Activated T-helper 2 cell treated with anti-CD3 and anti-CD28 coated beads, Interferon-gamma antibody, Interleukin-2, Interleukin-4, amounts not matched to agents 10 μg/mL and 5 μg/mL and 100 μg/mL, durations not matched to agents 14 hours and 24 hours and 36 hours (primary cell): ENCODE measurements at regions of chr12 and their contacts with region 1.

Region 1: DNA sequence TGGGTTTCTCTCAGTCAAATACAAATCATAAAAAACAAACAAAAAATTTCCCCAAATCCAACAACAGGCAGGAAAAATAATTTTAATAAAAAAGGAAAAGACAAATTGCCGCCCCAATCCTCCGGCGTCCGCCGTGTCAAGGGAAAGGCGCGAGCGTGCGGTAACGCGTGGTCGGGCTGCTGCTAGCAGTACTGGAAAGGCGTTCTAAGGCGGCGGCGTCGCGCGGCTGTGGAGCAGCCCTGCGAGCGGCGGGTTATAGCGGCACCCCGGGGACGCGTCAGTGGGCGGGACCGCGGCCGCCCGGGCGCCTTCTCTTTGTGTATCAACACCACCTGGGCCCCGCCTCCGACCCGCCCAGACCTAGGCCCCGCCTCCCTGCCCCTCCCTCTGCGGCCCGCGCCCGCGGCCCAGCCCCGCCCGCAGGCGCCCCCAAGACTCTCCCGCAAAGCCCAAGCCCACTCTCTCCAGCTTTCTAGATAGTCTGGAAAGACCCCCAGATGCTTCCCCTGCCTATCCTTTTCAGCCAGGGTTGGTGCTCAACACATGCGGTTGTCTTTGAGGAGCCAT is at the start of gene SLC38A2:
- DNase-seq: peak; percentile 95
- H3K4me3 Mint-ChIP-seq: peak within 1 kb of the TSS; percentile 92
- H3K27ac Mint-ChIP-seq: peak within 1 kb of the TSS; percentile 95
- H3K4me1 Mint-ChIP-seq: peaks cover 52% of the 10 kb centered on the region
- H3K27me3 Mint-ChIP-seq: no peaks in the 10 kb centered on the region
- total RNA-seq, gene SLC38A2: 141 and 143 TPM in 2 replicates

Region 2: GRCh38 chr12:46217541-46218321 is 154.9 kb before region 1 on chr12:
- intact Hi-C with region 1: loop called (anchors 2 kb)
- DNase-seq: peak; percentile 53
- H3K4me3 Mint-ChIP-seq: peak overlapping the region; percentile 67
- H3K27ac Mint-ChIP-seq: peak overlapping the region; percentile 99
- H3K4me1 Mint-ChIP-seq: peaks cover 88% of the 10 kb centered on the region
- H3K27me3 Mint-ChIP-seq: no peaks in the 10 kb centered on the region

Region 3: DNA sequence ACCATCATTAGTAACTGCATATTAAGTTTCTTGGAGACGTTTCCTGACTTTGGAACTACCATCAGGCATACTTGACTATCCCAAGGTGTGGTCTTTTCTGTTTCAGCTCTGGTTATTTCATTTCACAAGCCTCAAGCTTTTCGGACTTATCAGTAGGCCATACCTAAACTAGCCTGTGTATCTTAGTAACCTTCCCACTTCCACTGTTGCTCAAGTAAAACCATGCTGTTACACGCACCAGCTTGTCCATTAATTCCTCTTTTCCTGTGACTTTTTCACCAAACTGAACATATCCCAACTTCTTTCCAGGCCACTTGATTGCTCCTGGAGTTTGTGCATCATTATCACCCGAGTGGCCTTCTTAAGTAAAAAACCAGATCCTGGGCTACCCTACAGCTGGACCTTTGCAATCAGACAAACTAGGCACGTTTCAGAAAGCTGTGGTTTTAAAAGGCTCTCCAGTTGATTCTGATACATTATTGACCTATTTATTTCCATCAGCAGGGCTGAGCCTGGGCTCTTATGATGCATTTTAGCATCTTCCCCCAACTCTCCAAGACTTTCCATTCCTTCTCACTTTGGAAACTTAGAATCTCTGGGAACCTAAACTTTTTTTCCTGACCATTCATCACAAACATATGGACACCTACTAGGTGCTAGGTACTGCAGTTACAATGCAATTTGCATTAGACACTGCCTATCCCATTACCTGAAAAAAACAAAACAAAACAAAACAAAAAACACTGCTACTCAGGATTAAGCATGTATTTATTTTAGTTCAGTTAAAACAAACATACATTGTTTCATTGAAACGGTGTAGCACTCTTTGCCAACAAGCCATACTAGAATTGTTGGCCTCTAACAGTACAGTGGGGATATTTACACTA is 14.9 kb before region 1 on chr12:
- intact Hi-C with region 1: no loop called
- DNase-seq: no peak
- H3K4me3 Mint-ChIP-seq: no peak overlapping the region
- H3K27ac Mint-ChIP-seq: no peak overlapping the region
- H3K4me1 Mint-ChIP-seq: peaks cover 40% of the 10 kb centered on the region
- H3K27me3 Mint-ChIP-seq: no peaks in the 10 kb centered on the region

Region 4: DNA sequence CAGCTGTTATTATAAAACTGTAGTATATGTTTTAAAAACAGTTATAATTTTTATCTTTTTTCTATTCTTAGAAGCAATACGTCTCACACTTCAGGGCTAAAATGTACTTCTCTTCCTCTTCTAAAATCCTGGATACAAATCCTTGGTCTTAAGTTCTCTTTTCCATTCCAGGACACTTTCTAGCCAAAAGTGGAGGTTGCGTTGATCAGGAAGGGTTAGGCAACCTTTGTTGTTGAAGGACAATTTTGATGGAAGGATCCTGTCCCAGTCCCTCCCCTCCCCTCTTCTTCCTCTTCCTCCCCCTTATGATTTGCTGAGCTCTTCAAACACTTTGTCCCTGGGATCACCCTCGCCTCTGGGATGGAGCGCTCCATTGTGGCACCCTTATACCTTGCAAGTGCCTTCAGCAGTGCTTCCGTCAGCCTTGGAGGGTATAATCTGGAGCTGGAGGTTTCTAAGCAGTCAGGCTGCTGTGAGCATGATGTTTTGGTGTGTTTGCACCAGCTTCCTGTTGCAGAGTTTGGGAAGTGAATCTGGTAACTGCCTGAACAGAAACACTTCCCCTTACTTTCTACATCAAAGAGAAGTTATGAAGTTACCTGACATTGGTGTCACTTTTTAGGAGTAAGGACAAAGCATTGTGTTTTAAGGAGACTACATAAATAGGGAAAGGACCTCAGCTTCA is 87.4 kb after region 1 on chr12:
- intact Hi-C with region 1: loop called (anchors 1 kb)
- DNase-seq: no peak
- H3K4me3 Mint-ChIP-seq: peak overlapping the region; percentile 80
- H3K27ac Mint-ChIP-seq: peak overlapping the region; percentile 96
- H3K4me1 Mint-ChIP-seq: peaks cover 54% of the 10 kb centered on the region
- H3K27me3 Mint-ChIP-seq: no peaks in the 10 kb centered on the region

Region 5: DNA sequence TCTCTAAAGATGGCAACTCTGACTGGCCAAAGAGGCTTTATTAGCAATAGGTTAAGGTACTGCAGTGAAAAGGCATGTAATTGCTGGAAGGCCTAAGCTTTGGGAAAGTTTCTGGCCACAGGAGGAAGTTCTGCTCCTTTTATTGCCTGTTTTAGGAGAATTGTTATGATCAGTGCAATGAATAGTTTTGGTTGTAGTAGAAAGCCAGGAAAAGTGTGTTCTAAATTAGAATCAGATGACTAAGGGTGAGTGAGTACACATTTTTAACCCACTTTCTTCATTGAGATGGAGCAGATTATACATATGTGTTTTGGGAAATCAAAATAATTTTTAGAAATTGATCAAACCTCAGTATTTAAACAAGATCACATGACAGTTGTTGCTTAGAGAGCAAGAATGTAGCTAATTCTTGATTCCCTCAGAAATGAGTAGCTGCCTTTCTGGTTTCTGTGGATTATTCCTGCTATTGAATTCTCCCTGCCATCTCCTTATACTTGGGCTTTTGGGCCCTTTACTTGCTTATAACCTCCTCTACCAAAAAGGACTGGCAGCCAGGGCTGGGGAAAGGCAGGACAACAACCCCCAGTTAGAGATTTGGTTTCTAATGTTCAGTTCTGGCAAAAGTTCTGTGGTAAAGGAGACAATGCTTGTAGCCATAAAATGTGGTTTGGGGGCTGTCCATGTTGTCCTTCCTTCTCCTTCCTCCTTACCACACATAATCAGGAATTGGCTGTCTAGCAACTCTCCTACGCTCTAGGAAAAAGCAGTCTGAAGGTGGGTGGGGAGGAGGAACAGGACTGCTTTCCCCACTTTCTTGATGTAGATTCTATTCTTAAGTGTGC is 236.0 kb after region 1 on chr12:
- intact Hi-C with region 1: loop called (anchors 5 kb)
- DNase-seq: no peak
- H3K4me3 Mint-ChIP-seq: peak overlapping the region; percentile 37
- H3K27ac Mint-ChIP-seq: peak overlapping the region; percentile 65
- H3K4me1 Mint-ChIP-seq: peaks cover 37% of the 10 kb centered on the region
- H3K27me3 Mint-ChIP-seq: no peaks in the 10 kb centered on the region

Region 6: DNA sequence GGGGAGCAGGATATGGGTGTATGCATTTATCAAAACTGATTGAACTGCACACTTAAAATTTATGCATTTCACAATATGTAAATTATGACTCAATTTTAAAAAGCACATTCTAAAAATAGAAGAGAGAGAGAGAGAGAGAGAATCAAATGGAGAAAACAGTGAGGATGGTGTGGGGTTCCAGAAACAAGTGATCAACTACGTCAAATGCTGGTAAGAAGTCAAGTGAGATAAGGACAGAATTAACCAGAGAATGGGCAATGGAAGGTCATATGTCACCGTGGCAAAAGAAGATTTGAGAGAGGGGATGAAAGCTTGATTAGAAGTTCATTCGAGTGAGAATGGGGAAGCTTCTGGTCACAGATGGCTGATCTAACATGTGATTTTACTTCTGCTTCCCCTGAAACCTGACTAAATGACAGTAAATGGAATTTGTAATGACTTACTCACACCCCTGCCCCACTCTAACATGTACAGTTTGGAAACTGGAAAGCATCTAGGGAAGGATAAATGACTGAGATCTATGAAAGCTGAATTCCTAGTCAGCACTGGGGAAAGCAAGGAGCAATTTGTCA is 983.6 kb after region 1 on chr12:
- intact Hi-C with region 1: loop called (anchors 10 kb)
- DNase-seq: no peak
- H3K4me3 Mint-ChIP-seq: peak overlapping the region; percentile 45
- H3K27ac Mint-ChIP-seq: peak overlapping the region; percentile 96
- H3K4me1 Mint-ChIP-seq: peaks cover 67% of the 10 kb centered on the region
- H3K27me3 Mint-ChIP-seq: no peaks in the 10 kb centered on the region